HepG2 (cell line): ENCODE measurements at regions of chrX and their contacts with region 1.

Region 1: DNA sequence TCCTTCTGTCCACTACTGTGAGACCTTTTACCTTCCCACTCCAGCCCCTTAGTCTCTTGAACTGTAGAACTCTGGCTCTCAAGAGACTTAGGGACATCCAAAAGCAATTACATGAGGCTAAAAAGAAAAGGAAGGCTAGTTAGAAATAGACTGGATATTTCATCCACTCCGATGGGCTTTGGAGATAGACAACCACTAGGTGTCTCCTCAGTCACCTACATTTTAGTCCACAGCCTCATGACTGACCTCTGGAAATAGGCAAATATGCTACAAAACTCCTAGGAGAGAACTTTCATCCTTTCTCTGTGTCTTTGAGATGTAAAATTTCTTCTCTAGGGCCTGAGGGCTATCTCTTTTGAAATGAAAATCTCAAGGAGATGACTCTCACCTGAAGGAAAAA is 45.1 kb upstream of the LAMP2 start:
- DNase-seq: peak; percentile 32
- ATAC-seq: peak; percentile 86
- H3K4me3 ChIP-seq: no peak overlapping the region
- H3K27ac ChIP-seq: no peak overlapping the region
- H3K4me1 ChIP-seq: peaks cover 37% of the 10 kb centered on the region
- H3K27me3 ChIP-seq: no peaks in the 10 kb centered on the region
- CTCF ChIP-seq: peak; percentile 60
- EP300 ChIP-seq: no peak
- POLR2A ChIP-seq: no peak
- RAD21 ChIP-seq: no peak

Region 2: GRCh38 chrX:120499301-120500072 is 14.7 kb before region 1 on chrX:
- CTCF ChIA-PET with region 1: no interaction called
- POLR2A ChIA-PET with region 1: no interaction called
- in situ Hi-C with region 1: no loop called
- intact Hi-C with region 1: no loop called
- DNase-seq: no peak
- ATAC-seq: no peak
- H3K4me3 ChIP-seq: no peak overlapping the region
- H3K27ac ChIP-seq: no peak overlapping the region
- H3K4me1 ChIP-seq: no peaks in the 10 kb centered on the region
- H3K27me3 ChIP-seq: no peaks in the 10 kb centered on the region
- CTCF ChIP-seq: no peak
- EP300 ChIP-seq: no peak
- POLR2A ChIP-seq: no peak
- RAD21 ChIP-seq: no peak

Region 3: DNA sequence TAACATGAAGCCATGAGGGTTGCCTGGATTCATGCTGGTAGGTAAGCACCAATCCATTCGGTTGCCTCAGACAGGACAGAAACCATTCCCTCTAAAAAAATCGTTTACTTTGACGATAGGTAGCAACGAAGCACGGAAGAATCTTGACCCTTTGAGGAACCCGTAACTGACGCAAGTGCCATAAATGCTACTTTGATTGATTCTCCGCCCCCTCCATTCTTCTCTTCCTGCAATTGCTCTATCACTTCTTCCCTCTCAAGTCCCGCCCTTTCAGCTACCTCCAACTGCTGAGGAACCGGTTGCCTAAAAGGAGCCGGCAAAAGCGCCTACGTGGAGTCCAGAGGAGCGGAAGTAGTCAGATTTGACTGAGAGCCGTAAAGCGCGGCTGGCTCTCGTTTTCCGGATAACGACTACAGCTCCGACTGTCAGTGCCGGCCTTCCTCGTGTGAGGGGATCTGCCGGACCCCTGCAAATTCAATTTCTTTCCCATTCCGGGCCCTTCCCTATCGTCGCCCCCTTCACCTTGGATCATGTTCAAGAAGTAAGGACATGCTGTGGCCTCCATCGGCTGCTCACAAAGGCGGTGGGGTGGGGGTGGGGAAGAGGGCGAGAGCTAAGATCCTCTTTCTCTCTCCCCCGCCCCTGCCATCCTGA is 89.6 kb after region 1 on chrX and contains the start of gene MCTS1:
- CTCF ChIA-PET with region 1: no interaction called
- POLR2A ChIA-PET with region 1: no interaction called
- in situ Hi-C with region 1: no loop called
- intact Hi-C with region 1: loop called (anchors 10 kb)
- DNase-seq: peak; percentile 89
- ATAC-seq: peak; percentile 94
- H3K4me3 ChIP-seq: peak within 1 kb of the TSS; percentile 68 to 73 (median 72)
- H3K27ac ChIP-seq: peak within 1 kb of the TSS; percentile 89
- H3K4me1 ChIP-seq: peaks cover 22% of the 10 kb centered on the region; the same call in 1 of the 2 replicates
- H3K27me3 ChIP-seq: no peaks in the 10 kb centered on the region; a peak in 1 of 5 replicates
- CTCF ChIP-seq: no peak
- EP300 ChIP-seq: peak in 1 of 2 experiments; percentile 8; a peak in 1 of 4 replicates
- POLR2A ChIP-seq: peak in 1 of 2 experiments; percentile 42; a peak in 3 of 4 replicates
- RAD21 ChIP-seq: no peak
- total RNA-seq, gene MCTS1: 59.0 and 81.1 TPM in 2 replicates

Region 4: GRCh38 chrX:120664081-120664480 is 149.8 kb after region 1 on chrX:
- CTCF ChIA-PET with region 1: no interaction called
- POLR2A ChIA-PET with region 1: no interaction called
- in situ Hi-C with region 1: loop called (anchors 10 kb)
- intact Hi-C with region 1: no loop called
- DNase-seq: peak; percentile 7
- ATAC-seq: no peak
- H3K4me3 ChIP-seq: no peak overlapping the region
- H3K27ac ChIP-seq: no peak overlapping the region
- H3K4me1 ChIP-seq: no peaks in the 10 kb centered on the region
- H3K27me3 ChIP-seq: no peaks in the 10 kb centered on the region
- CTCF ChIP-seq: peak; percentile 27; the same call in 1 of the 2 replicates
- EP300 ChIP-seq: no peak
- POLR2A ChIP-seq: no peak
- RAD21 ChIP-seq: no peak